ENCODE measurements at regions of chr2 and their contacts with region 1.

Region 1: DNA sequence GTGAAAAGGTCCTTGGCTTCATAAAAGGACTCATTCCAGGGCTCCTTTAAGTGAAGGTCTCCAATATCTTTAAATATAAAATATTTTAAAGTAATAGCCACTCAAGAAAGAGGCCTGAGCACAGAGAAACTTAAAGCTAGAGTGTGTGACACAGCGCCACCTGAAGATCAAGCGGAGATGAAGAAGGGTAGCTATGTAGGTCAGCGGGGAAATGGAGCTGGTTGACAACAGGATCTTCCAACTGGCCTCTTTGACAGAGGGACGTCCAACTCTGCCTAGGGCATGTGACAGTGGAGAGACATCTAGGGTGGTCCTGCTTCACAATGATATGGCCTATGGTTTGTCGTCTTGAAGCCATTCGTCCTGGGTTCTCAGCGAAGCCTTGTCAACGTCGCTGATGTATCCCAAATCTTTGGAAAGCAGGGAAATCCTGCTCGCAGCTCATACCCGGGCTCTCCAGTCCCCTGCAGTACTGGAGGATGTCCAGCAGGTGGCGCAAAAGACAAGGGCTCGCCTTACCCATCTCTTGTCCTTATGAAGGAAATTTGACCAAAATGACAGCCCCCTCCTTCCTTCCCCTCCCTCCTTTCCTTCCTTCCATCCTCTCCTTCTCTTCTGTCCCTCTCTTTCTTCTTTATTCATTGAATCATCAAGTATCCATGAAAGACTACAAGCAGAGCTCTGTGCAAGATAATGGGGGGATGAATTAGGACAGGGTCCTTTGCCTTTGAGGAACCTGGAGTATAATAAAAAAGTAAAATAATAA is 59.6 kb downstream of the LONRF2 start:
- DNase-seq: peak; percentile 82

Region 2: GRCh38 chr2:99559075-99559662 is 703.6 kb before region 1 on chr2:
- intact Hi-C with region 1: loop called (anchors 5 kb)
- DNase-seq: peak; percentile 94

Region 3: DNA sequence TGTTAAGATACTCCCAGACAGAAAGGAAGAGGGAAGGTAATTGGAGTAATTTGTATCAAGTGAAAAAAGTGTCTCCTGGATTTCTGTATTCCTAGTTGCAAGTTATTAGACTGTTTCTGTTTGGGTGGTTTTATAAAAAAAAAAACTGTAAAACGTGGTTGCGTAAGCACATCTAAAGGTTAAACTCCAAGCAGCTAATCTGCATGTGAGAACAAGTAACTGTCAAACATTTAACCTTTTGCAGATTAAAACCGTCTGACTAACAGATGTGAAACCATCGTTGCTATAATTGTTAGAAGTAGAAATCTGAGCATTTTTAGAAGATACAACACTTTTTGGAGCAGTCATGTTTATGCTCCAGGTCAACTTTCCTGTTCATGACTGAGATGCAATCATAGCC is 192.7 kb before region 1 on chr2:
- intact Hi-C with region 1: no loop called
- DNase-seq: no peak

Region 4: DNA sequence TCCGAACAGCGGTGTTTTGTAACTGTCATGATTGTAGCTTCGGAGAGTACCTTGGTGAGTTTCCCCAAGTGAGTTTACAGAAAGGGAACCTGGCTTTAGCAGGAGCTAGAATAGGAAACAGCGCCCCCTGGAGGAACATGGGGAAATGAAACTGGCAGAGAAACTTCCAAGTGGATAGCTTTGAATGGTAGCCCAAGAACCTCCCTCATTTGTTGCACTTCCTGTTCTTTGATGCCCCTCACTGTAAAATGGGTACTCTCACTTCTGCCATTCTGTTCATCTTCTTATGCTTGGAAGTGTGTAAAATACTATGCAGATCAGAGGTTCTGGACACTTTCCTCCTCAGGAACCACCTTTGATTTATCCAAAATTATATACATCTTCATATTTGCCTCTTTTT is 118.5 kb after region 1 on chr2:
- intact Hi-C with region 1: loop called (anchors 1 kb)
- DNase-seq: no peak

Measured in cardiac septum (tissue), 1 donor.